Body of pancreas (tissue), 4 donors: ENCODE measurements at regions of chr20 and their contacts with region 1.

Region 1: DNA sequence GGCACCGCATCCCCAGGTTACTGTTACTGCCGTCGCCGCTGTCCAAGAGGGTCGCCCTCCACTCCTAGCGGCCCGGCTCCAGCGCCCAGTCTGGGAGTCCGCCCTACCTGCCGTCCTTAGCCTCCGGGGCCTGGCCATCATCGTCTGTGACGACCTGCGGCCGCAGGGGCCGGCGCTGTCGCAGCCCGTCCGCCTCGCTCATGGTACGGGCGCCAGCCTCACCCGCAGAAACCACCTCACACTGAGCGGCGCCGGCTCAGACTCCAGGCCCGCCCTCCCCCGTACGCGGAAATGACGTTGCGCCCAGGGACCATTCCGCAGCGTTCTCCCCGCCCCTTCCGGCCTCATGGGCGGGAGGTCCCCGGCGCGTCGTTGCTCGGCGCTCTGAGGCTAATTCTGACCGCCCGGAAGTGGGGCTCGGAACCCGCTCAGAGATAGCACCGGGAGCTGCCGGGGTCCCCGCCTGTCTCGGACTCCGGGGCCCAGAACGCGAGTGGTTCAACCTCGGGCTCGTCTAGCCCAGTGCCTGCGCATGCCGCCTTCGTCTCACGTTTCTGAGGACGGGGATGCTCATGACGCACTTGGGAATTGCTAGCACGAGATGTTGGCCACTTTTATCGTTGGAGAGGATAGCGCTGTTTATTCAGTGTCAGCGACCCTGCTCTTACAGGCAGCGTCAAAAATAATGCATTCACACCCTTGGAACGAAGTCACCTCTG is at the start of gene APMAP:
- DNase-seq: peak; percentile 95 to 97 (median 96)
- ATAC-seq: peak; percentile 96
- H3K4me3 ChIP-seq: peak within 1 kb of the TSS; percentile 50 to 79
- H3K27ac ChIP-seq: peak within 1 kb of the TSS; percentile 83 to 96 (median 92)
- H3K4me1 ChIP-seq: peaks cover 36% of the 10 kb centered on the region
- H3K27me3 ChIP-seq: no peaks in the 10 kb centered on the region
- CTCF ChIP-seq: peak in 2 of 7 experiments; percentile 7 to 13
- POLR2A ChIP-seq: peak; percentile 94 to 97 (median 96)
- total RNA-seq, gene APMAP: 38.9 to 51.4 TPM

Region 2: GRCh38 chr20:25061103-25061799 is 68.6 kb after region 1 on chr20:
- intact Hi-C with region 1: loop called (anchors 5 kb)
- DNase-seq: peak; percentile 57 to 79 (median 77)
- ATAC-seq: peak; percentile 45
- H3K4me3 ChIP-seq: no peak overlapping the region
- H3K27ac ChIP-seq: peak overlapping the region; percentile 67 to 91 (median 88)
- H3K4me1 ChIP-seq: peaks cover 60% of the 10 kb centered on the region
- H3K27me3 ChIP-seq: no peaks in the 10 kb centered on the region
- CTCF ChIP-seq: peak in 1 of 7 experiments; percentile 5
- POLR2A ChIP-seq: peak in 1 of 3 donors; percentile 10

Region 3: GRCh38 chr20:25195014-25195961 is 202.6 kb after region 1 on chr20 and contains the start of gene ENTPD6:
- intact Hi-C with region 1: loop called (anchors 10 kb)
- DNase-seq: peak; percentile 92 to 95 (median 94)
- ATAC-seq: peak; percentile 93
- H3K4me3 ChIP-seq: peak within 1 kb of the TSS; percentile 76 to 89
- H3K27ac ChIP-seq: peak within 1 kb of the TSS; percentile 76 to 94 (median 86)
- H3K4me1 ChIP-seq: peaks cover 50% of the 10 kb centered on the region
- H3K27me3 ChIP-seq: no peaks in the 10 kb centered on the region
- CTCF ChIP-seq: peak in 3 of 7 experiments; percentile 28 to 39 (median 31)
- POLR2A ChIP-seq: peak; percentile 74 to 88 (median 86)
- total RNA-seq, gene ENTPD6: 59.9 to 79.8 TPM

Region 4: DNA sequence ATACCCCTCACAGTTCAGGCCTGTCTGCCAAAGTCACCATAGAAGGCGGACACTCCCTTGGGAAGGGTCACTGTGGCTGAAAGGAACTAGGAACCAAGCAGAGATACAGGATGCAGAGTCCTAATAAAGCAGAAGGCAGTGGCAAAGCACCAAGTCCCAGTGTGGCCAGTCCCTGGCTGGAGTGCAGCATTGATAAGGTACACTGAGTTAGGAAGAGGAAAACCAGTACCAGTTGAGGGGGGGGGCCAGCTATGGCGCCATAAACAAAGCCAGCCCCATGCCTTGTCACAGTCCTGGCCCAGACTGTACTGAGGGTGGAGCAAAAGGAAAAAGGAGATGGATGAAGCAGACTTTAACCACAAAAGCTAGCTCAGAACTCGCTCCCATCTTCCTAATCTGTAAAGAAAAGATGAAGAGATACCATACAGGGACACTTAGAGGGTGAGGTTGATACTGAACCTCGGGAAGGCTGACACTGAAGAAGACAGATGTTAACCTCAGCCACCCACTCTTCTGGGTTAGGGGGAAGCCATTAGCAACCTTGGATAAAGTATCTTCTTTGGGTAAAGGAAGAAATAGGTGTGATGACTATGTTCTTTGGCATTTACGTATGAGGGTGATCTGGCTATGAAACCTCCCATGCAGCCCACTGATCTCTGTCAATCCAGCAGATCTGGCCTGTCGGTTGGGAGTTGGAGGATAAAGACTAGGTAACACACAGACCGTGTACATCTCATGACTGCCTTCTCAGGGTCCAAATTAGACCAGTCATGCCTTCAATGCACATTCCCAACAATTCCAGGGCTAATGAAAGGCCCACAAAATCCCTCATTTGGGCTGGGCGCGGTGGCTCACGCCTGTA is 390.3 kb after region 1 on chr20:
- intact Hi-C with region 1: no loop called
- DNase-seq: no peak
- ATAC-seq: no peak
- H3K4me3 ChIP-seq: no peak overlapping the region
- H3K27ac ChIP-seq: no peak overlapping the region
- H3K4me1 ChIP-seq: peaks cover 35% of the 10 kb centered on the region
- H3K27me3 ChIP-seq: no peaks in the 10 kb centered on the region
- CTCF ChIP-seq: no peak
- POLR2A ChIP-seq: no peak